ENCODE measurements at regions of chr1 and their contacts with region 1.

Region 1: GRCh38 chr1:189868021-189868420 is 609.6 kb downstream of the BRINP3 start:
- DNase-seq: no peak
- ATAC-seq: no peak
- H3K4me3 ChIP-seq: no peak overlapping the region
- H3K27ac ChIP-seq: no peak overlapping the region
- H3K4me1 ChIP-seq: no peaks in the 10 kb centered on the region
- H3K27me3 ChIP-seq: no peaks in the 10 kb centered on the region
- CTCF ChIP-seq: no peak
- POLR2A ChIP-seq: no peak
- RAD21 ChIP-seq: no peak

Region 2: DNA sequence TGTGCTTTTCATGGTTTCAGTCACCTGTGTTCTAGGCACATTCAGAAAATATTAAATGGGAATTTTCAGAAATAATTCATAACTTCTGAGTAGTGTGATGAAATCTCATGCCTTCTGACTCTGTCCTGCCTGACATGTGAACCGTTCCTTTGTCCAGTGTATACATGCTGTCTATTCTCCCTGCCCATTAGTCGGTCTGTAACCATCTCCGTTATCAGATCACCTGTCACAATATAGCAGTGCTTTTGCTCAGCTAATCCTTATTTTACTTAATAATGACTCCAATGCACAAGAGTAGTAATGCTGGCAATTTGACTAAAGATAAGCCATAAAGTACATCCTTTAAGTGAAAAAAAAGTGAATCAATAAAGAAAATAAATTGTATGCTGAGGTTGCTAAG is 12.1 kb after region 1 on chr1:
- CTCF ChIA-PET with region 1: no interaction called
- POLR2A ChIA-PET with region 1: no interaction called
- RAD21 ChIA-PET with region 1: no interaction called
- intact Hi-C with region 1: no loop called
- DNase-seq: no peak
- ATAC-seq: no peak
- H3K4me3 ChIP-seq: no peak overlapping the region
- H3K27ac ChIP-seq: no peak overlapping the region
- H3K4me1 ChIP-seq: no peaks in the 10 kb centered on the region
- H3K27me3 ChIP-seq: no peaks in the 10 kb centered on the region
- CTCF ChIP-seq: no peak
- POLR2A ChIP-seq: no peak
- RAD21 ChIP-seq: no peak

Region 3: DNA sequence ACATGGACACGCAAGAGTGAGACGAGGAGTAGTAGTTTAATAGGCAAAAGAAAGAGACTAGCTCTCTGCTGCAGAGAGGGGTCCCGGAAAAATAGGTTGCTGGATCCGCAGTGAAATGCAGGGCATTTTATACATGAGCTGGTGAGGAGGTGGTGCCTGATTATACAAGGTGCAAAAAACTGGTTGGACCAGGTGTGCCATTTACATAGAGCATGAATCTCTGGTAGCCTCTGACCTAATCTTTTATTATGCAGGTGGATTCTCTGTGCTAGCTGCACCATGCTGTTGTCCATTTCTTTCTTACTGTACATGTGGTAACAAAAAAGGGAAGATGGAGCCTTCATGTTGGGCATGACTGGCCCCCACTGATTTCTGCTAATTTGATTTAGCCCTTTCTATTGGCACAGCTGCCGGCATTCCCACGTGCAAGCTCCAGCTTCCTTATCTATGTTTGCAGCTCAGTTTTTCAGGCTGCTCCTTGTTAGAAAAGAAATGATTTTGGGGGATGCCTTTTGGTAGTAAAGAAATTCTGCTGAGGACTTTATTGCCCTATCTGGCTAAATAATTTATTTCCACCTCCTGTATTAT is 61.6 kb after region 1 on chr1:
- CTCF ChIA-PET with region 1: no interaction called
- POLR2A ChIA-PET with region 1: no interaction called
- RAD21 ChIA-PET with region 1: no interaction called
- intact Hi-C with region 1: loop called (anchors 10 kb)
- DNase-seq: no peak
- ATAC-seq: no peak
- H3K4me3 ChIP-seq: no peak overlapping the region
- H3K27ac ChIP-seq: no peak overlapping the region
- H3K4me1 ChIP-seq: no peaks in the 10 kb centered on the region
- H3K27me3 ChIP-seq: no peaks in the 10 kb centered on the region
- CTCF ChIP-seq: no peak
- POLR2A ChIP-seq: no peak
- RAD21 ChIP-seq: no peak

Measured in HCT116 (cell line).